ENCODE measurements at regions of chr11 and their contacts with region 1.

Region 1: GRCh38 chr11:2400069-2400760 is at the start of gene TSSC4:
- DNase-seq: peak; percentile 100
- ATAC-seq: peak; percentile 95
- H3K4me3 ChIP-seq: peak within 1 kb of the TSS; percentile 68 to 72
- H3K27ac ChIP-seq: peak within 1 kb of the TSS; percentile 87 to 95
- H3K4me1 ChIP-seq: no peaks in the 10 kb centered on the region
- H3K27me3 ChIP-seq: no peaks in the 10 kb centered on the region
- total RNA-seq, gene TSSC4: 35.2 to 44.3 TPM

Region 2: DNA sequence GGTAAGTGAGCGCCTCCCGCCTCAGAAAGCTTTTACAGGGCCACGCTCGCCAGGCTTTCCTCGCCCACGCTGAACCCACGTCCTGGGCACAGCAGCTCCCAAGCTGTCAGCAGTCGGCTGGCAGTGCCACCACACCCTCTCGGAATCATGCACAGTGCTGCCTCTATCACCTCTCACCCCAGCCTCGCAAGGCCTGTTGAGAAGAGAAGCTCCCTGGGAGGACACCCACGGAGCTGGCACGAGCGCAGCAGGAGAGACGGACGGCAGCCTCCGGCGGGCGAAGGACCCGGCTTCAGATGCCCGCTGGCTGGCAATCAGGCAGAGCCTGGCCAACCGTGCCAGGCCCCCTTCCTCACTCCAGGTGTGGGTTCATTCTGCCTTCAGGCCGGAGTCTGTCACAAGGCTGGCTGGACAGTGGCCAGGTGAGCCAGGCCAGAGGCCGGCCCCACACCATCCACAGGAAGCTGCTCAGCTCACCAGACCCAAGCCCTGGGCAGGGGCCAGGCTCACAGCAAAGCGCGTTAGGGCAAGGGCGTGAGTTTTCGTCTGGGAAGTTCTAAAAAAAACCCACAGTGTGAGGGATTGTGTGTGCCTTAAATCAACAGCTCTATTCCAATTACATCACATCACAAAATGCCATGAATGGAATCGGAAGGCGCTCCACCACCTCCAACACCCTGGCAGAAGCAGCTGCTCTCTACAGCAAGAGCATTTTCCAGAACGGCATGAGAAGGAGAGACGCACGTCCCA is 1124.0 kb before region 1 on chr11:
- intact Hi-C with region 1: loop called in 1 of 2 experiments (anchors 5 kb)
- DNase-seq: peak; percentile 85 to 90
- ATAC-seq: peak; percentile 78
- H3K4me3 ChIP-seq: no peak overlapping the region
- H3K27ac ChIP-seq: peak overlapping the region in 1 of 2 donors; percentile 74
- H3K4me1 ChIP-seq: no peaks in the 10 kb centered on the region
- H3K27me3 ChIP-seq: no peaks in the 10 kb centered on the region

Region 3: DNA sequence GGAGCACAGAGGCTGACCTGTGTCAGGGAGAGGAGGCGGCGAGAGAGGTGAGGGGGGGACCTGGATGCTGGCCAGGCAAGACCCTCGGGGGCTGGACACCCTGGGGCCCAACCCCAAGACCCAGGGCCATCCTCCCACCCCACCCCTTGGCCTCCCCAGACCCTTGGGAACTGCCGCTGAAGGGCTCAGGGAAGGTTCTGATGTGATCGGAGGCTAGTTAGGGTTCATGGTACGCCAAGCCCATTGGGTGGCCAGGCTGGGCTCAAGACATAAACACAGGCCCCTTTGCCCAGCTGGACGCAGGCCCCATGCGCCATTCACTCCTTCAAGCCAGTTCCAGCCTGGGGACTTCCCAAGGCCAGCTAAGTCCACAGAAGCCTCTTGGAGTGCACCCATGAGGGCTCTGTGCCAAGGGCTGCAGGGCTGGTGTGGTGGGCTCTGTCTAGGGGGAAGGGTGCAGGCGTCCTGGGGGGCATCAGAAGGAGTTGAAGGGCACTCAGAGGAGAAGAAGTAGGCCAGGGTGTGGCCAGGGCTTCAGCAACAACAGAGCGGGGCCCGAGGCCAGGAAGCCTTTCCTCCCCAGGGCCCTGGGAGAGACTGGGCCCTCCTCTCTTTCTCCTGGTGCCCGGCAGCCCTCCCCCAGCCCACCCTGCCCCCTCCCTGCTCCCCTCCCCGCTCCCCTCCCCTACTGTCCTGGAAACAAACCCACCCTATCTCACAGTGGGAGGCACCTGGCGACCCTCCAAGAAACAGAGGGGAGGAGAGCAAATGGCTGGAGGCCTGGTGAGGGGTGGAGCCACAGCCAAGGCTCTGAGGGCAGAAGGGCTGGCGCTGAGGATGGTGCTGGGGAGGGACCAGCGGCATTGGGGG is 85.5 kb before region 1 on chr11:
- intact Hi-C with region 1: loop called in 1 of 2 experiments (anchors 2 kb)
- DNase-seq: peak; percentile 93 to 95
- ATAC-seq: peak; percentile 87
- H3K4me3 ChIP-seq: no peak overlapping the region
- H3K27ac ChIP-seq: peak overlapping the region; percentile 59 to 67
- H3K4me1 ChIP-seq: no peaks in the 10 kb centered on the region
- H3K27me3 ChIP-seq: no peaks in the 10 kb centered on the region

Region 4: DNA sequence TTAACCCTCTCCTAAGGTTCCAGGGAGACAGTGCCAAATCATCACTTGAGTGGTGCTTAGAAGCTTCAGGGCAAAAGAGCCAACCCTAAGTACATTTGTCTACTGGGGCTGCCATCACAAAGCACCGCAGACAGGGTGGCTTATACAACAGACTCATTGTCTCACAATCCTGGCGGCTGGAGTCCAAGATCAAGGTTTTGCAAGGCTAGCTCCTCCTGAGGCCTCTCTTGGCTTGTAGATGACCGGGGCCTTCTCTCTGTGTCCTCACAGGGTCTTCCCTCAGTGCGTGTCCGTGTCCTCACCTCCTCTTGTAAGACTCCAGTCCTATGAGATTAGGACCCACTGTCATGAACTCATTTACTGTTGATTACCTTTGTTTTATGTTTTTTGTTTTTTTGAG is 57.2 kb before region 1 on chr11:
- intact Hi-C with region 1: no loop called
- DNase-seq: no peak
- ATAC-seq: no peak
- H3K4me3 ChIP-seq: no peak overlapping the region
- H3K27ac ChIP-seq: no peak overlapping the region
- H3K4me1 ChIP-seq: no peaks in the 10 kb centered on the region
- H3K27me3 ChIP-seq: no peaks in the 10 kb centered on the region

Region 5: DNA sequence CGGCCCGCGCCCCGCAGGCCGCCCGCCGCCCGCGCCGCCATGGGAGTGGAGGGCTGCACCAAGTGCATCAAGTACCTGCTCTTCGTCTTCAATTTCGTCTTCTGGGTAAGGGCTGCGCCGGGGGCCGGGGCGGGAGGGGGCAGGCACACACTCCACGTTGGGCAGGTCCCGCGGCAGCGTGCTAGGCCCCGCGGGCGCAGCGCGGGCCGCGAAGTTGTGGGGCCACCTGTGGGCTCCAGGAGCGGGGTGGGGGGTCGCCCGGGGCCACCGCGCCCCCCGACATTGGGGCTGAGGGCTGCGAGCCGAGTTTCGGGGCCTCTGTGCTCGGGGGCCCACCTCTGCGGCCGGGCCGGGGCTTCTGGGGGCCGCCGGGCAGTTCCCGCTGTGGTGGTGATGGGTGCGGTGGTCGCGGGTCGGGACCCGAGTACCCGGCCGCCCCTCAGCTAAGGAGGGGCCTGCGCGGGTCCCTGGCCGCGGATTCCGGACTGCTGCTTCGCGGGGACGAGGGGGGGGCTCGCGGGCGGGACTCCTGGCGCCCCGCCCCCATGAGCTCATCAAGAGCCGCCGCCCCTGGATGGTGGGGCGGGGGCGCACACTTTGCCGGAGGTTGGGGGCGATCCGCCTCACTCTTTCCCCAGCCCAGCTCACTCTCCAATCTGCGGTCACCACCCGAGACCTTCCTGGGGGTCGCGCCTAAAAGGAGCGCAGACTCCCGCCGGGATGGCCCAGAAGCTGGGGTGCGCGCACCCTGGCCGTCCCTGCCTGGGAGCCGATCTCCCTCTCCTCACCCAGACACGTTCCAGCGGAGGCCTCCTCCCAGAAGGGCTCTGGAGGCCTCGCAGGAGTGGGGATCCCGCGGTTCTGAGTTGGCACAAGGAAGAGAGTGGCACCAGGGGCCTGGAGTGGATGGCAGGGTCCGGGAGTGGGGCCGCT is 22.4 kb before region 1 on chr11:
- intact Hi-C with region 1: loop called in 1 of 2 experiments (anchors 1 kb)
- DNase-seq: peak; percentile 83 to 91
- ATAC-seq: peak; percentile 78
- H3K4me3 ChIP-seq: peak overlapping the region; percentile 59 to 97
- H3K27ac ChIP-seq: peak overlapping the region; percentile 87 to 92
- H3K4me1 ChIP-seq: no peaks in the 10 kb centered on the region
- H3K27me3 ChIP-seq: no peaks in the 10 kb centered on the region

Region 6: GRCh38 chr11:2382936-2383851 is 17.0 kb before region 1 on chr11:
- intact Hi-C with region 1: loop called in 1 of 2 experiments (anchors 2 kb)
- DNase-seq: peak in 1 of 2 donors; percentile 84
- ATAC-seq: peak; percentile 15
- H3K4me3 ChIP-seq: no peak overlapping the region
- H3K27ac ChIP-seq: peak overlapping the region; percentile 34 to 62
- H3K4me1 ChIP-seq: no peaks in the 10 kb centered on the region
- H3K27me3 ChIP-seq: no peaks in the 10 kb centered on the region

Region 7: GRCh38 chr11:2522671-2523141 is 122.5 kb after region 1 on chr11:
- intact Hi-C with region 1: no loop called
- DNase-seq: peak; percentile 37 to 43
- ATAC-seq: no peak
- H3K4me3 ChIP-seq: no peak overlapping the region
- H3K27ac ChIP-seq: no peak overlapping the region
- H3K4me1 ChIP-seq: no peaks in the 10 kb centered on the region
- H3K27me3 ChIP-seq: no peaks in the 10 kb centered on the region

Region 8: DNA sequence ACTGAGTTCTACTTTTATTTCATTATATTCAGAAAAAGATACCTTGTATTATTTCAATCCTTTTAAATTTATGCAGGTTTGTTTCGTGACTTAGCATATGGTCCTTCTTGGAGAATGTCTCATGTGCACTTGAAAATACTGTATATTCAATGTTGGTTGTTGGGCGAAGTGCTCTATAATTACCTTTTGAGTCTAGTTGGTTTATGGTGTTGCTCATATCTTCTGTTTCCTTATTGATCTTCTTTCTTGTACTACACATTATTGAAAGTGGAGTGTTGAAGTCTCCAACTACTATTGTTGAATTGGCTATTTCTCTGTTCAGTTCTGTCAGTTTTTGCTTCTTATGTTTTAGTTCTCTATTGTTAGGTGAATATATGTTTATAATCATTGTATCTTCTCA is 209.1 kb after region 1 on chr11:
- intact Hi-C with region 1: no loop called
- DNase-seq: no peak
- ATAC-seq: no peak
- H3K4me3 ChIP-seq: no peak overlapping the region
- H3K27ac ChIP-seq: no peak overlapping the region
- H3K4me1 ChIP-seq: no peaks in the 10 kb centered on the region
- H3K27me3 ChIP-seq: no peaks in the 10 kb centered on the region

Measured in aorta (tissue), 5 donors.